ENCODE measurements at regions of chr6 and their contacts with region 1.

Region 1: DNA sequence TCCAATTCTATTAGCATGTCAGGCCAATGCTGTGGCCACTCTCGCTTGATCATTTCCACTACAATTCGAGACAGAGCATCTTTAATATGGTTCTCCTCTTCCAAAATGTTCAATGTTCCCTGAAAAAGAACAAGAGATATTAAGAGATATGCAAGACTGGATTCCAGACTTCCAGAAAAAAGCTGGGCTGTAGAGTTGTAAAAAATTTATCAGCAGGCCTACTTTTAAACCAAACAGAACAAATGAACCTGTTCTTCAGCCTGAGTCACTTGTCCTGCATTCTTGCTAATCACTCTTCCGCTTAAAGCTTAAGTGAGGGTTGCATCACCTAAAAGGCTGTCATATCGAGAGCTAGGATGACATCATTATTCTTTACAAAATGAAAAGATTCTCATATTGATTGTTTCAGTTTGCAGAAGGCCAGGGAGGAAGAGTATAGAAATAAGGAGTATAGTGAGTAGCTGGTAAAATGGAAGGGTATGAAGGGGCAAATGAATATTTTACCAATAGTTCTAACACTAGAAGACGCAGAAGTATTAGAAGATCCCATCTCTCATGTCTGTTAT is 4.9 kb downstream of the XPO5 start:
- DNase-seq: peak in 1 of 2 donors; percentile 15
- H3K4me3 ChIP-seq: no peak overlapping the region
- H3K27ac ChIP-seq: peak overlapping the region; percentile 62 to 87 (median 64)
- H3K4me1 ChIP-seq: peaks cover 18 to 19% of the 10 kb centered on the region in 2 donors
- H3K27me3 ChIP-seq: no peaks in the 10 kb centered on the region
- CTCF ChIP-seq: no peak
- POLR2A ChIP-seq: no peak

Region 2: GRCh38 chr6:43521836-43522235 is 49.1 kb before region 1 on chr6:
- intact Hi-C with region 1: loop called (anchors 5 kb)
- DNase-seq: peak; percentile 78 to 79
- H3K4me3 ChIP-seq: no peak overlapping the region
- H3K27ac ChIP-seq: peak overlapping the region; percentile 30 to 68 (median 49)
- H3K4me1 ChIP-seq: peaks cover 25 to 40% of the 10 kb centered on the region in 2 donors
- H3K27me3 ChIP-seq: no peaks in the 10 kb centered on the region
- CTCF ChIP-seq: no peak
- POLR2A ChIP-seq: no peak